PC-9 (cell line): ENCODE measurements at regions of chr3 and their contacts with region 1.

Region 1: DNA sequence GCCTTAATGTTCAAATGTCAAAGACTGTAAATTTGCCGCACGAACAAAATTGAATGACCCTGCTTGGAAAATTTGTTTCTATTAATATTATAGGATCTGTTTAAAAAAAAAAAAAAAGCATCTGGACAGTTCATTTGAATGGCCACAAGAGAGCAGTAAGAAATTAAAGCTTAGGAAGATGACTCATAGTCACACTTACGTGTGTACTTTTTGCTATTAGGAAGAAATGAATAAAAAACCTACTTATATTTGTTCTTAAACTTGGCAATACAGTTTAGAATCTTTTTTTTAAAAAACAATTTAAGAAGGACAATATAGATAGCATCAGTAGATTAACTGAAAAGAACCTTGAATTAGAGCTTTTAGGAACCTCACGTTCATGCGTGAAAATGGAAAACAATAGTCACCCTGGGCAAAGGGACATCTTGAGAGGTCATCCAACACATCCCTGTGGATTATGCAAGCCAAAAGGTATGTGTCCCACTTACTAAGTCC is 621.8 kb downstream of the MECOM start:
- DNase-seq: peak in 1 of 2 experiments; percentile 66
- H3K4me3 ChIP-seq: no peak overlapping the region
- H3K27ac ChIP-seq: no peak overlapping the region
- H3K4me1 ChIP-seq: peaks cover 25% of the 10 kb centered on the region
- H3K27me3 ChIP-seq: no peaks in the 10 kb centered on the region
- CTCF ChIP-seq: peak; percentile 78

Region 2: DNA sequence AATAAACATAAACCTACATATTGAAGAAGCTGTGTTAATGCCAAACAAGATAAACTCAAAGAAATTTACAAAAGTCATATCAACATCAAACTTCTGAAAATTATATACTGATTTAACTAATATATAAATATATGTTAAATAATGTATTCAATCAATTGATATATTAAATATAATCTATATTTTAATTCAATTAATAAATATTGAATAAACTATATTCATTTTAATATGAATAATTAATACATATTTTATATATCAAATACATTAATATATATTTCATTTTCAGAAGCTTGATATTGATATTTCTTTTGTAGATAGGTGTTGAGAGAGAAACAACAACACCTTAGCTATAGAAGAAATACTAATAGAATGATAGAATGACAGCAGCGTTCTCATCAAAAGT is 146.3 kb before region 1 on chr3:
- CTCF ChIA-PET with region 1: no interaction called
- POLR2A ChIA-PET with region 1: no interaction called
- intact Hi-C with region 1: no loop called
- DNase-seq: no peak
- H3K4me3 ChIP-seq: no peak overlapping the region
- H3K27ac ChIP-seq: no peak overlapping the region
- H3K4me1 ChIP-seq: no peaks in the 10 kb centered on the region
- H3K27me3 ChIP-seq: no peaks in the 10 kb centered on the region
- CTCF ChIP-seq: no peak

Region 3: DNA sequence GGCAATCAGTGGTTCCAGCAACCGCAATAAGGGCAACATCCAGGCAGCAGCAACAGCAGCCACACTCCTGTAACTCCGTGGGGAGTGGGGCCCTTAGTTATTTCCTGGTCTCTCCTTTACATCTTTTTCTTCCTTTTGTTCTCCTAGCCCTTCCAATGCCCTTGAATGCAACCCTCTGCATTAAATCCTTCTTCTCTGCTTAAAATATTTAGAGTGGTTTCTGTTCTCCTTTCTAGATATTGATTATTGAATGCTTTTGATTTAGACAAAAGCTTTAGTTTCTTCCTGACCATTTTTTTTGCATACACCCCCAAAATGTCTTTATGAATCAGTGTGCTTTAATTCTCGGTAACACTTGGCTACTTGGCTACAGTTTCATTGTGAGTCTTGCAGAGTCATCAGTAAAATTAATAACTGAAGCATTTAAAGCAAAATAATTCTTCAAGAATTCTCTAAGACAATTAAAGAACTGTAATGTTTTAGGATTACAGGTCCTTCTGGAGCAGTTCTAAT is 35.7 kb after region 1 on chr3:
- CTCF ChIA-PET with region 1: no interaction called
- POLR2A ChIA-PET with region 1: no interaction called
- intact Hi-C with region 1: no loop called
- DNase-seq: no peak
- H3K4me3 ChIP-seq: no peak overlapping the region
- H3K27ac ChIP-seq: no peak overlapping the region
- H3K4me1 ChIP-seq: no peaks in the 10 kb centered on the region
- H3K27me3 ChIP-seq: no peaks in the 10 kb centered on the region
- CTCF ChIP-seq: no peak

Region 4: GRCh38 chr3:169112153-169112892 is 70.6 kb after region 1 on chr3:
- CTCF ChIA-PET with region 1: no interaction called
- POLR2A ChIA-PET with region 1: no interaction called
- intact Hi-C with region 1: loop called (anchors 2 kb)
- DNase-seq: peak in 1 of 2 experiments; percentile 77
- H3K4me3 ChIP-seq: no peak overlapping the region
- H3K27ac ChIP-seq: peak overlapping the region; percentile 67
- H3K4me1 ChIP-seq: peaks cover 13% of the 10 kb centered on the region
- H3K27me3 ChIP-seq: no peaks in the 10 kb centered on the region
- CTCF ChIP-seq: no peak

Region 5: DNA sequence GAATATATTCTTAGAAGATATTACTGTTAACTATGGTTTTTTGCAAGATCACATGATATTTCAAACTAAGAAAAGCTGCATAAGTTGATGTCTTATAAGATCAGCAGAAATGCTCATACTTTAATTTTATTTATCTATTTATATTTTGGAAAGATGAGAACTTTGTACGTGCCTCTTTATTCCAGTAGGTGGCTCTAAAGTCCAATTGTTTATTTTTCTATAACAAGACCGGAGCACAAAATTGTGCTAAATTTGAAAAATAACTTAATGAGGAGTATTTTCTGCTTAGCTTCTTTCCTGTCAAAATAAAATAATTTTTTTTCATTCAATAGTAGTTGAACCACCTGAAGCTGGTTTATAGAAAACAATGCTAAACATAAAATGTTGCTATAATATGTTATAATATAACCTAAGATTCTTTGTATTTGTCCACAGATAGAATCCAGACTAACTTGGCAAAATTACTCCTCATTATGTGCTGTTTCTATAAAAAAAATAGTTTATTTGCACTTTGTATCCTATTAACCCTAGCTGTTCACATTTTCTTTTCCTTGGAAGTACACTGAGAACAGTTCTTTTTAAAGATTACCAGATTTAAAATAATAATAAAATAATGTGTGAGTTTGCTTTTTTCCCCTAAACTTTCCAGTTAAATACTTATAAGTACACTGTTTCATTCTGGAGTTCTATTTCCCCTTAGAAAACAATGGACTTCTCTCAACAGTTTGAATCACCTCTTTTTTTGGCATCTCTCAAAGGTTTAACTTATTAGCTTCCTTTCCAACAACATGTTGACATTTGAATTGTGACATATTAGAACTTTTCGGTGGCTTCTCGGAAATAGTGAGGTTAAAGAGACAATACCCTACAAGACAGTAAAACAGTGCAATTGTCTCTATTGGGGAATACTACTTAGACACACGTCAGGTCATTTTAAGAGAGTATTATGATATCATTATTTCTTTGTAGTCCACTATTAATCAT is 91.7 kb after region 1 on chr3:
- CTCF ChIA-PET with region 1: no interaction called
- POLR2A ChIA-PET with region 1: no interaction called
- intact Hi-C with region 1: loop called (anchors 2 kb)
- DNase-seq: no peak
- H3K4me3 ChIP-seq: no peak overlapping the region
- H3K27ac ChIP-seq: 0 out of 2 replicates have a peak overlapping the region, but pooled peaks have one; percentile 13
- H3K4me1 ChIP-seq: peaks cover 19% of the 10 kb centered on the region; the same call in 1 of the 2 replicates
- H3K27me3 ChIP-seq: no peaks in the 10 kb centered on the region
- CTCF ChIP-seq: peak; percentile 82